Activated T-helper 1 cell treated with anti-CD3 and anti-CD28 coated beads, Interleukin-12 subunit alpha, Interleukin-12 subunit beta, Interleukin-2, Interleukin-4 antibody, amounts not matched to agents 30 ng/mL and 10 ng/mL and 1 ng/mL, durations not matched to agents 14 hours and 24 hours and 36 hours (primary cell): ENCODE measurements at regions of chr6 and their contacts with region 1.

Region 1: DNA sequence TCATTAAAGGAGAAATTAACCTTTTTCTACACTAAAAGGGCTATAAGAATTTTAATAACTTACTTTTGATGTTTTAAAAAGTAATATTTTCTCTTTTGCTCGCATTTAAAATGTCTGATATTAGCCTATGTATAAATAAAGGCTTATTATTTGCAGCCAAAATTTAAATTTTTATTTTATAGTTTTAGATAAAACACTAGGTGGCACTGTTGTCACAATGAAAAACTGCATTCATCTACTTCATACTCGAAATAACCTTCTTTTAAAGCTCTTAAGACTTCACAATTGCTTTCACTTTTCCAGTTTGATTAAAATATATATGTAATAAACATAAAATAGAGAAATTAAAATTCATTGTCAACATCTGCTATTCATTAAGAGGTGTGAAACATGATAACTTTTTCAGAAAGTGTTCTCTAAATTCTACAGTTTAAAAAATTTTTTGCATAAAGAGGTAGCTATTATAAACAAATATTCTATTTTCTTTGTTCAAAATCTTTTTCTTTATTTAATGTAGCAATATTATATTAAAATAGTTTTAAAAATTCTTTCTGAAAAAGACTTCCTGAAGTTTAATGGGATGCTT is 78.8 kb upstream of the DEFB112 start:
- DNase-seq: no peak
- H3K4me3 Mint-ChIP-seq: no peak overlapping the region
- H3K27ac Mint-ChIP-seq: no peak overlapping the region
- H3K4me1 Mint-ChIP-seq: no peaks in the 10 kb centered on the region
- H3K27me3 Mint-ChIP-seq: no peaks in the 10 kb centered on the region

Region 2: DNA sequence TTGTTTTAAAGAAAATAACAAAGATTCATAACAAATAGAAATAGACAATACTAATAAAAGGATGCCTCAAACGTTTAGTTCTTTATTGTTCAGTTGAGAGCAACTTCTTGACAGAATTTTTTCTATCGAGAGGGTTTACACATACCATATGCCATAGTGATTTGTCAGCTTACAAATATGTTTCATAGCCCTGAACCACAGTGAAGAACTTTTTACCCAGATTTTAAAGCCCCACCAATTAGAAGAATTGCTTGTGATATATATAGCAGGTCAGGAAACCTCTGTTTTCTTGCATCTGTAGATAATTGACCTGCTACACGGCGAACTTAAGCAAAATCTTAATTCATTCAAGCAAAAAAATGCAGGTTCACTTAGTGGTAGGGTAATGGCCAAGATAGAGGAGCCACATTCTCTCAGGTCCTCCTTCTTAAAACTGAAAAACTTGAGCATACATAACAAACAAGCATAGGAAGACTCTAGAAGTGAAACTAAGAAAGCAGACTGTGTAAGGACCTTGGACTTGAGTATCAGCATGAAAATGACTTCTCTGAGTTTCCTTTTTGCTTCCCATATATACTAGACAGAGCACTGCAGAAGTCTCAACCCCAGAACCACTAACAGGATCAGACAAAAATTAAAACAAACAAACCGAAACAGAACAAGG is 301.6 kb before region 1 on chr6:
- intact Hi-C with region 1: no loop called
- DNase-seq: no peak
- H3K4me3 Mint-ChIP-seq: no peak overlapping the region
- H3K27ac Mint-ChIP-seq: no peak overlapping the region
- H3K4me1 Mint-ChIP-seq: no peaks in the 10 kb centered on the region
- H3K27me3 Mint-ChIP-seq: no peaks in the 10 kb centered on the region

Region 3: DNA sequence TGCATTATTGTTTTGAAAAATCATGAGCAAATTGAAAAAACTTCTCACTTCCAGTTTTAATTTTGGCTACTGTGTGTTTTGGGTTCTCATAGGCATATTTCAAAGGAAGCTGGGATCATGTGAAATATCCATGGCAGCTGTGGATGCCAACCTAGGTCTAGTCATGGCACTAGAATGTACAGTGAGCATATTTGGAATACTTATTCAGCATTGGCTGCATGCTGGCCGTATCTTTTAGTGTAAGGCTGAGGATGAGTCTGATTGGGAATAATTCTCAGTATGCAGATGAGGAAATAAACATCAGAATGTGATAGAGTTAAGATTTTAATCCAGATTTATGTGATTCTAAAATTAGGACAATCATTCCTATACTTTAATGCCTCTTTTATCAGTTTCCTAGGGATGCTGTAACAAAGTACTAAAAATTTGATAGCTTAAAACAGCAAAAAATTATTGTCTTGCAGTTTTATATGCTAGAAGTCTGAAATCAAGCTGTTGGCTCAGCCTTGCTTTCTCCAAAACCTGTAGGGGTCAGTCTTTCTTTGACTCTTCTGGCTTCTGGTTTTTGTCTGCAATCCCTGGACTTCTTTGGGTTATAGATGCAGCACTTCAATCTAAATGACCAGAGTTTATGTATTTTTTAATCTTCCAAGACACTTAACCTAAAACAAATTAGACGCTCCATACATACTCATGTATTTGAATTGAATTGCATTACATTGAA is 41.1 kb before region 1 on chr6:
- intact Hi-C with region 1: no loop called
- DNase-seq: no peak
- H3K4me3 Mint-ChIP-seq: no peak overlapping the region
- H3K27ac Mint-ChIP-seq: no peak overlapping the region
- H3K4me1 Mint-ChIP-seq: no peaks in the 10 kb centered on the region
- H3K27me3 Mint-ChIP-seq: peaks cover 1% of the 10 kb centered on the region

Region 4: DNA sequence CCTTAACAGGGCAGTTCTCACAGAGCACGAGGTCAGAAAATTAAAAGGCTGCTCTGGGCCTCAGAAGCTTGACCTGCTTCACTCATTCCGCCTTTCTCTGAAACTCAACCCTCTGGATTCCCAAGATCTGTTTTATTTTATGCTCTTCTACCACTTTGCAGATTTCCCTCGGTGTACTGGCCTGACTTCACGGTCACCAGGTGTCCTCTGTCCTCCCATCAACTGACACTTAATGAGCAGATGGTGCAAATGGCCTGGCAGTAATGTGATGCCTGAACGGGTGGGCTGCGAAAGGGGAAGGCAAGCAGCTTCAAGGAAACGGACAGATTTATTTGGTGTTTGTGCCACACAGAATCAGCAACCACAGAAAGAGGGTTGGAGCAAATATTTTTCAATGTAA is 415.2 kb after region 1 on chr6:
- intact Hi-C with region 1: no loop called
- DNase-seq: no peak
- H3K4me3 Mint-ChIP-seq: no peak overlapping the region
- H3K27ac Mint-ChIP-seq: no peak overlapping the region
- H3K4me1 Mint-ChIP-seq: no peaks in the 10 kb centered on the region
- H3K27me3 Mint-ChIP-seq: no peaks in the 10 kb centered on the region

Region 5: DNA sequence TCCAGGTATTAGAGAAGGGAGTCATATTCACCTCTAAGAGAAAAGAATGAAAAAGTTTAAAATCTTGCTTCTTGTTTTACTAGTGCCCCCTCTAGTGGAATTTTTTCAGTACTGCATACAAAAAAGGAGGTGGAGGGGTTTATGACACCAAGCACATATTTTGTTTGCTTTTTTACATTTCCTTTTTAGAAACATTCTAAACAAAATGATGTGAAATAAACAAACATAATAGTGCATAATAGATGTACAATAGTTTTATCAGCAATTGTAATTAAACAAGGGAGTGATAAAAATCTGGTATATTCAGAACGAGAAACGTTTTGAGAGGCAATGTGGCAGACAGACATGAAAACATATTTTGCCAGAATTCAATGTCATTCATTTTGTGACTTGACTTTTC is 473.8 kb after region 1 on chr6:
- intact Hi-C with region 1: loop called (anchors 1 kb)
- DNase-seq: no peak
- H3K4me3 Mint-ChIP-seq: no peak overlapping the region
- H3K27ac Mint-ChIP-seq: no peak overlapping the region
- H3K4me1 Mint-ChIP-seq: no peaks in the 10 kb centered on the region
- H3K27me3 Mint-ChIP-seq: no peaks in the 10 kb centered on the region

Region 6: DNA sequence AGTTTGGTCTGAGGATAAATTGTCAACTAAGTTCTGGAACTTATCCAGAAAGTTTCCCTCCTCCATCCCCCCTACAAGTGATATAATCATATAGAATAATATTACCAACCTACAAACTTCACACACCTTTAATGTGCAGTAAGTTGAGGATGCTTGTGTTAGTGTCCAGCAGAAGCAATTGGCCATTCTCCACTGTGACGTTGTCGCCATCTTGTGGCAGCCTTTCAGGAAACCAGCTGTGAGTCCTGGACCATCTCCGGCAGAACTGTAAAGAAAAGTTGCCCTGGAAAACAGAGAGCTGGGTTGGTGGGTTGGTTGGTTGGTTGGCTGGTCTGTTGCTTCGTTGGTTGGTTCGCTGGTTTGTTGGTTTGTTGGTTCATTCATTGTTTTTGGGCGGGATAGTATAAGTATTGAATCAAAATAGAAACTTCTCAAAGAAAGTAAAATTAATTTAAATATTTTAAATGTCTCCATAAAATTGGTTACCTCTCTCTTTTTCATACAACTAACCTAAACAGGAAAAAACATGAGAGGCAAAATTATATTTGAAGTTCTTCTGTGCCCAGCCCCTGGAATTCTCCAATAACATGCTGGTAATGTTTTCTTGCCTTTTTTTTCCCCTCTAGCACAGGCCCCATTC is 1831.4 kb after region 1 on chr6:
- intact Hi-C with region 1: loop called (anchors 10 kb)
- DNase-seq: peak; percentile 5
- H3K4me3 Mint-ChIP-seq: no peak overlapping the region
- H3K27ac Mint-ChIP-seq: no peak overlapping the region
- H3K4me1 Mint-ChIP-seq: peaks cover 5% of the 10 kb centered on the region
- H3K27me3 Mint-ChIP-seq: peaks cover 19% of the 10 kb centered on the region